Vagina (tissue), 2 donors: ENCODE measurements at regions of chr22 and their contacts with region 1.

Region 1: DNA sequence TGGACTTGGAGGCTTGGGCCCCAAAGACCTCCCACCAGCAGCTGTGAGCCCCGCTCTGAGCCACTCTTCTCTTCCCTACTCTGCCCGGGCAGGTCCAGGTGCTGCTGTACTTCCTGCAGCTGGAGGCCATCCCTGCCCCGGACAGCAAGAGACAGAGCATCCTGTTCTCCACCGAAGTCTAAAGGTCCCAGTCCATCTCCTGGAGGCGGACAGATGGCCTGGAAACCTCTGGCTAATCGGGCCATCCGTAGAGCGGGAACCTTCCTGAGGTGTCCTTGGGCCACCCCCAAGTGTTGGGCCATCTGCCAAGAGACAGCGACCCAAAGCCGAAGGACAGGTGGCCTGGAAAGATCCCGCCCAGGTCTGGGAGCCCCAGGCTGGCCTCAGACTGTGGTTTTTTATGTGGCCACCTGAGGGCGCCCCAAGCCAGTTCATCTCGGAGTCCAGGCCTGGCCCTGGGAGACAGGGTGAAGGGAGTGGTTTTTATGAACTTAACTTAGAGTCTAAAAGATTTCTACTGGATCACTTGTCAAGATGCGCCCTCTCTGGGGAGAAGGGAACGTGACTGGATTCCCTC is 135.1 kb downstream of the BCR start:
- DNase-seq: no peak
- H3K4me3 ChIP-seq: no peak overlapping the region
- H3K27ac ChIP-seq: no peak overlapping the region
- H3K4me1 ChIP-seq: no peaks in the 10 kb centered on the region
- H3K27me3 ChIP-seq: no peaks in the 10 kb centered on the region
- CTCF ChIP-seq: peak; percentile 45 to 81 (median 45)
- POLR2A ChIP-seq: no peak

Region 2: DNA sequence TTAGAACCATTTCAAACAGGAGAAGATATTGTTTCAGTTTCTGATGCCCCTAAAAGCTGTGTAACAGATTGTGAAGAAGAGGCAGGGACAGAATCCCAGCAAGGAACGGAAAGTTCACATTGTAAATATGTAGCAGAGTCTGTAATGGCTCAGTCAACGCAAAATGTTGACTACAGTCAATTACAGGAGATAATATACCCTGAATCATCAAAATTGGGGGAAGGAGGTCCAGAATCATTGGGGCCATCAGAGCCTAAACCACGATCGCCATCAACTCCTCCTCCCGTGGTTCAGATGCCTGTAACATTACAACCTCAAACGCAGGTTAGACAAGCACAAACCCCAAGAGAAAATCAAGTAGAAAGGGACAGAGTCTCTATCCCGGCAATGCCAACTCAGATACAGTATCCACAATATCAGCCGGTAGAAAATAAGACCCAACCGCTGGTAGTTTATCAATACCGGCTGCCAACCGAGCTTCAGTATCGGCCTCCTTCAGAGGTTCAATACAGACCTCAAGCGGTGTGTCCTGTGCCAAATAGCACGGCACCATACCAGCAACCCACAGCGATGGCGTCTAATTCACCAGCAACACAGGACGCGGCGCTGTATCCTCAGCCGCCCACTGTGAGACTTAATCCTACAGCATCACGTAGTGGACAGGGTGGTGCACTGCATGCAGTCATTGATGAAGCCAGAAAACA is 223.9 kb after region 1 on chr22:
- intact Hi-C with region 1: loop called (anchors 10 kb)
- DNase-seq: no peak
- H3K4me3 ChIP-seq: no peak overlapping the region
- H3K27ac ChIP-seq: no peak overlapping the region
- H3K4me1 ChIP-seq: peaks cover 9% of the 10 kb centered on the region
- H3K27me3 ChIP-seq: no peaks in the 10 kb centered on the region
- CTCF ChIP-seq: peak; percentile 69 to 93 (median 92)
- POLR2A ChIP-seq: no peak